ENCODE measurements at regions of chr11 and their contacts with region 1.

Region 1: DNA sequence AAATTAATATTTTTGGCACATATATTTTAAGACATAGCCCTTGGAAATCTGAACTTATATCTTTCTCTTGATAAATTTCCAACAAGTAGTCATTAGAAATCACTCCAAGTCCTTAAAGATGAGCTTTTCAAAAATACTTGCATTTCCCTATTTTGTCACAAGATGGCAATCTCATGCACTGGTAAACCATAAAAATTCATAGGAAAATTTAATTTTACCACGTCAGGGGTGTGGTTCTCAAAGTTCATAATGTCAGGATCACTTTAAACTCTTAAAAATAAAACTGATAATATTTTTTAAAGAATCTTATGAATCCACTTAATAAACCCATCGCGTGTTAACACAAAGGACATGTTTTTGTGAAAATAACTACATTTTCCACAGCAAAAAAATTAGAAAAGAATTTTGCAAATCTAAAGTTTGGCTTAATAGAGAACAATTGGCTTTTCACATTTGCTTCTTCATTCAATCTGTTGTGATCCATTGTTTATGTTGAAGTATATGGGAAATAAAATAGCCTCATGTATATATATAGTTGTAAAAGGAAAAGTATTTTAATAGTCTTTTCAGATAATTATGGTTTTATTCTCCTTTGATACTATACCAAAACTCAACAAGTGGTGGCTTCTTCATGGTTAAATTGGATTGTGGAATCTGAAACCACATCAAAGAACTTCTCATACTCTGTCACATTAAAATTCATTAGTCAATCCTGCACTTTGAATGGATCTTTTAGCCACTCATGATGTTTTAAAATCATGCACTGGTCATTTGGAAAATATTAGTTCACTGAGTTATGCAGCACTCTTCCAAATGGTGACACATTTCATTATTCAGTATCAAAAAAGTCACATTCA is 169.1 kb downstream of the CADM1 start:
- DNase-seq: peak; percentile 31
- H3K4me3 Mint-ChIP-seq: no peak overlapping the region
- H3K27ac Mint-ChIP-seq: no peak overlapping the region
- H3K4me1 Mint-ChIP-seq: no peaks in the 10 kb centered on the region
- H3K27me3 Mint-ChIP-seq: peaks cover 35% of the 10 kb centered on the region
- CTCF ChIP-seq: peak; percentile 48

Region 2: GRCh38 chr11:114511538-114511937 is 823.6 kb before region 1 on chr11:
- CTCF ChIA-PET with region 1: no interaction called
- POLR2A ChIA-PET with region 1: no interaction called
- intact Hi-C with region 1: no loop called
- DNase-seq: no peak
- H3K4me3 Mint-ChIP-seq: no peak overlapping the region
- H3K27ac Mint-ChIP-seq: no peak overlapping the region
- H3K4me1 Mint-ChIP-seq: no peaks in the 10 kb centered on the region
- H3K27me3 Mint-ChIP-seq: no peaks in the 10 kb centered on the region
- CTCF ChIP-seq: no peak

Region 3: DNA sequence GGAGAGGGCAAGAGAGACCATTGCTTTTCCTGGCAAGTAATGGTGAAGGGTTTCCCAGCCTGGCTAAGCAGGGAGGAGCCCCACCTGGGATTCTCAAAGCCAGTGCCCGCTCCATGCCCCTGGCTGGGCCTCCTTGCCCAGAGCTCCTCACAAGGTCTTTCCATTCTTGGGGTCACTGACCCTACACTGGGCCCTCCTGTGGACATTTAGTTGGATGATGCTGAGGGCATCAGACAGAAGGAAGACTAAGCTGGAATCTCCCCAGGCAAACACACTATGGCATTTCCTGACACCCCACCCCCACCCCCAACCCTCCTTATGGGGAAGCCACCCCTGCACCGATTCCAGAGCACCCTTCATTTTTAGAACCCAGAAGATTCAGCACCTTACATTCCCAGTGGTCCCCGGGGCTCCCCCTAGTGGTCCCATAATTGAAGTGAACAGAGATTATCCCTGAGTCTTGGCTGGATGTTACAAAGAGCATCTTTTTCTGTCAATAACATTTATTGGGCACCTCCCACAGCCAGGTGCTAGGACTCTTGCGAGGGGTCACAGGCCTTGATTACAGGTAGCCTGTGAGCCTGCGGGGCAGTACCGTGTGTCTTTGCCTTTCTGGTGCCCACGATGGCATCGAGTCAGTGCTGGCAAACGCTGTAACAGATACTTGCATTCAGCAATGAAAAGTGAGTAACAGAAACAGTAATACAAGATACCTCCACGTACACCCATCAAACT is 889.2 kb after region 1 on chr11:
- CTCF ChIA-PET with region 1: no interaction called
- POLR2A ChIA-PET with region 1: no interaction called
- intact Hi-C with region 1: loop called (anchors 5 kb)
- DNase-seq: peak; percentile 14
- H3K4me3 Mint-ChIP-seq: no peak overlapping the region
- H3K27ac Mint-ChIP-seq: no peak overlapping the region
- H3K4me1 Mint-ChIP-seq: no peaks in the 10 kb centered on the region
- H3K27me3 Mint-ChIP-seq: no peaks in the 10 kb centered on the region
- CTCF ChIP-seq: peak; percentile 47

Measured in MCF 10A (cell line).